Caco-2 (cell line): ENCODE measurements at regions of chr20 and their contacts with region 1.

Region 1: GRCh38 chr20:22453239-22454080 is 130.9 kb downstream of the FOXA2 start:
- DNase-seq: peak; percentile 58 to 67
- H3K4me3 ChIP-seq: no peak overlapping the region
- H3K4me3 Mint-ChIP-seq: no peak overlapping the region
- H3K27ac Mint-ChIP-seq: no peak overlapping the region
- H3K4me1 ChIP-seq: no peaks in the 10 kb centered on the region
- H3K4me1 Mint-ChIP-seq: peaks cover 7% of the 10 kb centered on the region
- H3K27me3 ChIP-seq: no peaks in the 10 kb centered on the region; the same call in 1 of the 2 replicates
- H3K27me3 Mint-ChIP-seq: peaks cover 10% of the 10 kb centered on the region
- CTCF ChIP-seq: peak; percentile 80 to 89

Region 2: DNA sequence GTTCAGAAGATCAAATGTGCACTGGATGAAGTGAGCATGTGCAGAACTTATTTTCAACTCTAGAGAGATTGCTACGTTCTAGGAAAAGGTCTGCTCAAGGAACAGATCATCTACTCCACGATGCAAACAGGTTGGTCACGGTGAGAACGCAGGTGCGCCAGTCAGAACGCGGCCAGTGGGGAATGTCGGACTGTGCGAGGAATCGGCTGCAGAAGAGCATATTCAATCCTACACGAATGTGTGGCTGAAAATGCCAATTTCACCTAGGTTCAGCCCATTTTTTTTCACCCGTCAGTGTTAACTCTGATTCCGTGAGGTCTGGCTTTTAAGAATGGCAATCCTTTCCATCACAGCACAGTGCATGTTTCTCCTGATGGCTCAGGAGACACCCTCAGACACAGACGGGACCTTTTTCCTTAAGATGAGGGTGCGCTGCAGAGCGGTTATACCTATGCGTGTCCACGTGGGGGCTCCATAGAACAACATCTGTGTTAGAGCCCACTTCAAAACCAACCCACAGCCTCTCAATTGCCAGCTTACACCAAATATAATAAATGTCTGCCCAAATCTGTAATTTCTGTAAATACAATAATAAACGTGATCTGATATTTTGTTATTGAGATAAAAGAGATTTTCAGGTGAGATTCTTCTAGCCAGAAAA is 119.4 kb before region 1 on chr20:
- CTCF ChIA-PET with region 1: no interaction called
- POLR2A ChIA-PET with region 1: no interaction called
- intact Hi-C with region 1: loop called (anchors 1 kb)
- DNase-seq: peak; percentile 69 to 78
- H3K4me3 ChIP-seq: no peak overlapping the region
- H3K4me3 Mint-ChIP-seq: no peak overlapping the region
- H3K27ac Mint-ChIP-seq: no peak overlapping the region
- H3K4me1 ChIP-seq: no peaks in the 10 kb centered on the region; the same call in 1 of the 2 replicates
- H3K4me1 Mint-ChIP-seq: peaks cover 2% of the 10 kb centered on the region
- H3K27me3 ChIP-seq: peaks cover 1% of the 10 kb centered on the region; the same call in 1 of the 2 replicates
- H3K27me3 Mint-ChIP-seq: peaks cover 28% of the 10 kb centered on the region
- CTCF ChIP-seq: peak; percentile 84 to 86

Region 3: GRCh38 chr20:22385602-22386305 is 67.7 kb before region 1 on chr20:
- CTCF ChIA-PET with region 1: no interaction called
- POLR2A ChIA-PET with region 1: no interaction called
- intact Hi-C with region 1: loop called (anchors 1 kb)
- DNase-seq: peak in 1 of 2 experiments; percentile 51
- H3K4me3 ChIP-seq: no peak overlapping the region
- H3K4me3 Mint-ChIP-seq: no peak overlapping the region
- H3K27ac Mint-ChIP-seq: no peak overlapping the region
- H3K4me1 ChIP-seq: no peaks in the 10 kb centered on the region
- H3K4me1 Mint-ChIP-seq: peaks cover 7% of the 10 kb centered on the region
- H3K27me3 ChIP-seq: no peaks in the 10 kb centered on the region
- H3K27me3 Mint-ChIP-seq: no peaks in the 10 kb centered on the region
- CTCF ChIP-seq: peak; percentile 41 to 55

Region 4: GRCh38 chr20:22471156-22471844 is 17.8 kb after region 1 on chr20:
- CTCF ChIA-PET with region 1: no interaction called
- POLR2A ChIA-PET with region 1: no interaction called
- intact Hi-C with region 1: loop called (anchors 2 kb)
- DNase-seq: peak in 1 of 2 experiments; percentile 29
- H3K4me3 ChIP-seq: no peak overlapping the region
- H3K4me3 Mint-ChIP-seq: no peak overlapping the region
- H3K27ac Mint-ChIP-seq: peak overlapping the region; percentile 28
- H3K4me1 ChIP-seq: peaks cover 17% of the 10 kb centered on the region
- H3K4me1 Mint-ChIP-seq: peaks cover 11% of the 10 kb centered on the region
- H3K27me3 ChIP-seq: no peaks in the 10 kb centered on the region
- H3K27me3 Mint-ChIP-seq: no peaks in the 10 kb centered on the region
- CTCF ChIP-seq: no peak

Region 5: GRCh38 chr20:22511943-22512910 is 58.8 kb after region 1 on chr20:
- CTCF ChIA-PET with region 1: interaction called, 15 read pairs
- POLR2A ChIA-PET with region 1: interaction called, 3 read pairs
- intact Hi-C with region 1: loop called (anchors 1 kb)
- DNase-seq: peak; percentile 92 to 96
- H3K4me3 ChIP-seq: no peak overlapping the region
- H3K4me3 Mint-ChIP-seq: peak overlapping the region; percentile 35
- H3K27ac Mint-ChIP-seq: peak overlapping the region; percentile 50
- H3K4me1 ChIP-seq: peaks cover 71% of the 10 kb centered on the region
- H3K4me1 Mint-ChIP-seq: peaks cover 65% of the 10 kb centered on the region
- H3K27me3 ChIP-seq: no peaks in the 10 kb centered on the region
- H3K27me3 Mint-ChIP-seq: no peaks in the 10 kb centered on the region
- CTCF ChIP-seq: no peak

Region 6: DNA sequence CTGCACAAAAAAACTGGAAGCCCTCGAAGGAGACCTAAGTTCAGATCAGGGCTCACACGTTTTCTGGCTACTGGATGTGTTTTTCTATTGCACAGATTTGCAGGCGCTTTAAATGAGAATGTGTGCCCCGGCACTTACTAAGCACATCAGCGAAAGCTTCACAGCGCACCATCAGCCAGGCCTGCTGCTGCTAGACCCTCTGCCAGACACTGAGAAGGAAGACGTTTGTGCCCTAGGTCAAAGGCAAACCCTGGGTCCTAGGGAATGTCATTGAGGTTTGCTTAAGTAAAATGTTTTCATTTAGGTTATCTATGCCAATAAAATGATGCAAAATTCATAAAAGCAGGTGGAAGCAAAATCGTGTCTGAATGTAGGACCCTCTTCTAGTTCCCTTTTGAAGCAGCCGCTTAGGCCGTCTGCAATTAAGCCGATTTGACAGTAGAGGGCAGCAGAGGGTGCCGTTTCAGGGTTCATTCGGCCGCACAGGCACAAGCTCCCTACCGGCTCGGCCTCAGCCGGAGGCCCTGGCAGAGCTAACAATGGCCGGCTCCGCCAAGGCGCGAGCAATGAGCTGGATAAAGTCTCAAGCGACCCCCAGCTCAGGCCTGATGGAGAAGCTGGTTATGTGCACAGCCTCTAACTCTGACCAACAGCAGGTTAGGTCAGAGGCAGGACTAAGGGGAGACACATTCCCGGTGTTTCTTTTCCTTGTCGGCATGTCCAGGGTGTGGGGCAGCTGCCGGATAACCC is 238.1 kb after region 1 on chr20:
- CTCF ChIA-PET with region 1: no interaction called
- POLR2A ChIA-PET with region 1: no interaction called
- intact Hi-C with region 1: no loop called
- DNase-seq: peak; percentile 81 to 83
- H3K4me3 ChIP-seq: no peak overlapping the region
- H3K4me3 Mint-ChIP-seq: no peak overlapping the region
- H3K27ac Mint-ChIP-seq: no peak overlapping the region
- H3K4me1 ChIP-seq: peaks cover 6% of the 10 kb centered on the region; the same call in 1 of the 2 replicates
- H3K4me1 Mint-ChIP-seq: peaks cover 2% of the 10 kb centered on the region
- H3K27me3 ChIP-seq: no peaks in the 10 kb centered on the region
- H3K27me3 Mint-ChIP-seq: no peaks in the 10 kb centered on the region
- CTCF ChIP-seq: peak; percentile 83 to 96